ENCODE measurements at regions of chr1 and their contacts with region 1.

Region 1: DNA sequence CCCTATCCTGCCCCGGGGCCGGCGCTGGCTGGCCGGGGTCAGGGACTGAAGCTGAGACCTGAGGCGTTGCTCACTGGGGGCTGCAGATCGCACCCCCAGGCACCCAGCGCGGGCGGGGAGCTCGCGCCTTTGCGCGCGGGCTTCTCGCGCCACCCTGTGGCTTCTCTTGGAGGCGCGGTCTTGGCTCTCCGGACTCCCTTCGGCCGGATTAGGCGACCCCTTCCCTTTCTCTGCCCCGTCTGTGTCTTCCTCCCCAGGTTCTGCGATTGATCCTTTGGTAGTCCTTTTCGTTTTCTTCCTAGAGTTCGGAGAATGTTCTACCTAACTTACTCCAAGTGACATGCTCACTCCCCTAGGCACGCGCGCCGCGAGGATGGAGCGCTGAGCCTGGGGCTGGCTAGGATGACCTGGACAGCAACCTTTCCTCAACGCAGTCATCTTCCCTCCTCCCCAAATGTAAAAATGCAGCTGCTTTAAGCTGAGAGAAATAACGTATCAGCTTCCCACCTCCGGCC is 495 bp upstream of the NTRK1 start:
- DNase-seq: peak; percentile 85
- CTCF ChIP-seq: peak; percentile 77

Region 2: GRCh38 chr1:156689035-156689952 is 170.9 kb before region 1 on chr1:
- CTCF ChIA-PET with region 1: interaction called, 111 read pairs
- POLR2A ChIA-PET with region 1: no interaction called
- DNase-seq: peak; percentile 87
- CTCF ChIP-seq: peak; percentile 87

Region 3: GRCh38 chr1:156717275-156717805 is 142.8 kb before region 1 on chr1:
- CTCF ChIA-PET with region 1: interaction called, 15 read pairs
- POLR2A ChIA-PET with region 1: interaction called, 3 read pairs
- DNase-seq: no peak
- CTCF ChIP-seq: no peak

Region 4: DNA sequence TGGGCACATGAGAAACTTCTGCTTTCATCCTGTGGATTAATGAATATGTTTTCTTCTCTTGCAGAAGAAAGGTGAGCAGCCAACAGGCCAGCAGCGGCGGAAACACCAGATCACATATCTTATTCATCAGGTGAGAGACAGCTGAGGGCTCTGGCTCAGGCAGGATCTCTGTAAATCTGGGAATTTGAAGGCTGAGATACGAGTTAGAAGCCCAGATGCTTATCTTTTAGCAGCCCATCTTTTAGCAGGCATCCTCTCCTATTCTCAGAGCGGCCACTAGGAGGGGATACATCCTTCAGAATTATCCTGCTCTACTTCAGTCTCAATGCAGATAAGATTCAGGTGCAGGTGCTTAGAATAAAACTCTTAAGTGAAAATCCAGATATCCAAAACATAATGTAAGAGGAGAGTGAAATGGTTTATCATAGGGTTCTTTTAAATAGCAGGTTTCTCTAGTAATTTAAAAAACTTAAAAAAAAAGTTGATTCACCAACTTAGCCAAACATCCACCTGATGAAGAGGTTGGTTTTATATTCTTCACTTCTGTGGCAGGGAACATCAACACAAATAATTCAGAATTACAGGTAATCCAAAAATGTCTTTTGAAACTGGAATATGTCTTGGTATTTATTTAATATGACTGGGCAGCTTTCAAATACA is 62.8 kb before region 1 on chr1:
- CTCF ChIA-PET with region 1: interaction called, 131 read pairs
- POLR2A ChIA-PET with region 1: interaction called, 3 read pairs
- DNase-seq: peak; percentile 60
- CTCF ChIP-seq: peak; percentile 73

Region 5: GRCh38 chr1:156833603-156834002 is 26.6 kb before region 1 on chr1:
- CTCF ChIA-PET with region 1: interaction called, 149 read pairs
- POLR2A ChIA-PET with region 1: no interaction called
- DNase-seq: no peak
- CTCF ChIP-seq: no peak

Region 6: DNA sequence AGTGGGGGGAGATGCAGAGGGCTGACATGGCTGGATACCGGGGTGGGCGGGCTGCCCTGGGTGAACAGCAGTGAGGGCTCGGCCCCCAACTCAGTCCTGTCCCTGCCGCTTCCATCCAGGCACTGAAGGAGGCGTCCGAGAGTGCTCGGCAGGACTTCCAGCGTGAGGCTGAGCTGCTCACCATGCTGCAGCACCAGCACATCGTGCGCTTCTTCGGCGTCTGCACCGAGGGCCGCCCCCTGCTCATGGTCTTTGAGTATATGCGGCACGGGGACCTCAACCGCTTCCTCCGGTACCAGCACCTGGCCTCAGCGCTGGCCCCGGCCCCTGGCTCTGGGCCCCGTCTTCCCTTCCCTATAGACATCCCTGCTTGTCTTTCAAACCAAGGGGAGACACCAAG is 16.1 kb after region 1 on chr1:
- CTCF ChIA-PET with region 1: interaction called, 30 read pairs
- POLR2A ChIA-PET with region 1: no interaction called
- DNase-seq: no peak
- CTCF ChIP-seq: no peak

Region 7: GRCh38 chr1:156927215-156928042 is 67.3 kb after region 1 on chr1:
- CTCF ChIA-PET with region 1: interaction called, 13 read pairs
- POLR2A ChIA-PET with region 1: no interaction called
- DNase-seq: peak; percentile 65
- CTCF ChIP-seq: peak; percentile 67

Region 8: DNA sequence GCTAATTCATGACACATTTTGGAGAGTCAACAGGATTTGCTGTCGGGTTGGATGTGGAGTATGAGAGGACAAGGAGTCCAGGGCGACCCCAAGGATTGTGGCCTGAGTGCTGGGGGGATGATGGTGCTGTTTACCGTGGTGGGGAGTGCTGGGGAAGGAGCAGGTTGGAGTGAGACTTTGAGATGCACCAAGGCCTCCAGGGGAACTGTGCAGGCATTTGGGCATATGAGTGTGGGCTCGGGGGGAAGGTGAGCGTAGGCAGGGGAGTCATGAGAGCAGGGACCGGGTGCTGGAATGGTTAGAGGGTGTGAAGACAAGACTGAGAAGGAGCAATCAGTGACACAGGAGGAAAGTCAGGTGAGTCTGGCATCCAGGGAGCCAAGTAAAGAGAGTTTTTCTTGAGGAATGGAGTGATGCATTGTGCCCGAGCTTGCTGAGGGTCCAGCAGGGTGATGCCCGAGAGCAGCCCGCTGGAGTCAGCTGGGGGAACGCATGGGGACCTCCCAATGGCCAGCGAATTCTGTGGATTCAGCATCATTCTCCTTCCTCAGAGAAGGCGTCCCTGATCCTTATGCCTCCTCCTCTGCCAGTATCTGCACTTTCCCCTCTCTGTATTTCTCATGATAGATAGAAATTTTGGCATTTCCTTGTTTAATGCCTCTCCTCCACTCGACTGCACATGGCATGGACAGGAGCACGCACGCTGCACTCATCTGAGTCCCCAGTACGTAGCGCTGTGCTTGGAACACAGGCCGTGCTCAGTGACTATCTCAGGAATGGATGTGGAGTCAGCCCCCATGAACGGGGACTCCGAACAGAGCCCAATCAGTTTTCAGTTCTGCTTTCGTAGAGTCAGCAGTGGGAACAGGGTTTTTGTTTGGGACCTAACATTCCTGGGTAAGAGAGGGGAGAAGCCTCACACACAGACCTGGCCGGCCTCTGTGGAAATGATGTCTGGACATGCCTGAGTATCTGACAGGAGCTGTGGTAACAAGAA is 330.1 kb after region 1 on chr1:
- CTCF ChIA-PET with region 1: no interaction called
- POLR2A ChIA-PET with region 1: no interaction called
- DNase-seq: no peak
- CTCF ChIP-seq: no peak

Measured in GM10248 (cell line).